Esophagus muscularis mucosa (tissue), 4 donors: ENCODE measurements at regions of chr10 and their contacts with region 1.

Region 1: DNA sequence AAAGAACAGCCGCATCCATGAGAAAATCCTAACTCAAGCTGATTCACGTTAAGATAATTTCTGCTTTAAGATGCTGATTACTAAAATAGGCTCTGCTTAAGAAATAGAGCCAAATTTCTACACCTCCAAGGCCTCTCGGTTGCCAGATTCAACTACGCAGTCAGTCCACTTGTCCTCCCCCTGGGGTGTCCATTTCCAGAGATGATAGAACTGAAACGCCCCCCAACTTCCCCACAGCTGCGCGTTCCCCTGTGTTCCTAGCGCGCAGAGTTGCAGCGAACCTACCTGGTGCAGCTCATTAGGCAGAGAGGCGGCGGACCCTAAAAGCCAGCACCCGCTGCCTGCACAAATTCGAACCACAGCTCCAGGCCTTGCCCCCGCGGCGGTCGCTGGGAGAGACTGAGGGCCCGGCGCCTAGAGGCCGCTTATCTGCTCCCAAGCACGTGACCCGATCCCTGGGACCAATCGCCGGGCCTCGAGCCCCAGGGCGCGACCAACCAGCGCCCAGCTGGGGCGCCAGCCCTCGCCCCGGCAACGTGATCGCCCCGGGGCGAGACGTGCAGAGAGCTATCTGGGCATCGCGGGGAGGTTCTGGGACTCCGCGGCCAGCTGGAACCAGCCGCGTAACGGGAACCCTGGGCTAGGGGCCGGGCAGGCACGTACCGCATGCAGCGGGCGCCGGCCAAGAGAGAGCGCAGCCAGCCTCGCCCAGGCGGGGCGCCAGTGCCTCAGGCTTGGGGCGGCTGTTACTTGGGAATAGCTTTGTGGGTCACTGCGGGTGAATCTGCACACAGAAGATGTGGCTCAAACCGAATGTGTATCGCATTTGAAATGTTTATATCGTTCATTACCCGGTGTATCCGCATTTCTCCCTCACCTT is at the start of gene PPP1R3C:
- DNase-seq: peak; percentile 95
- H3K4me3 ChIP-seq: peak within 1 kb of the TSS; percentile 65 to 78 (median 69)
- H3K27ac ChIP-seq: peak within 1 kb of the TSS; percentile 82 to 91 (median 86)
- H3K4me1 ChIP-seq: peaks cover 21 to 46% (median 37%) of the 10 kb centered on the region in 4 donors
- H3K27me3 ChIP-seq: no peaks in the 10 kb centered on the region
- CTCF ChIP-seq: peak; percentile 32 to 43 (median 37)
- EP300 ChIP-seq: no peak
- POLR2A ChIP-seq: peak; percentile 89
- total RNA-seq, gene PPP1R3C: 46.7 to 111 (median 87.8) TPM

Region 2: GRCh38 chr10:91298224-91298871 is 334.6 kb before region 1 on chr10:
- intact Hi-C with region 1: loop called (anchors 5 kb)
- DNase-seq: no peak
- H3K4me3 ChIP-seq: peak overlapping the region; percentile 45 to 55 (median 52)
- H3K27ac ChIP-seq: peak overlapping the region; percentile 36 to 68 (median 50)
- H3K4me1 ChIP-seq: peaks cover 3 to 13% (median 13%) of the 10 kb centered on the region in 4 donors
- H3K27me3 ChIP-seq: peaks cover 0 to 5% (median 0%) of the 10 kb centered on the region in 4 donors
- CTCF ChIP-seq: peak; percentile 87 to 94 (median 91)
- EP300 ChIP-seq: no peak
- POLR2A ChIP-seq: no peak

Region 3: GRCh38 chr10:91493313-91493712 is 139.6 kb before region 1 on chr10:
- intact Hi-C with region 1: loop called (anchors 2 kb)
- DNase-seq: no peak
- H3K4me3 ChIP-seq: no peak overlapping the region
- H3K27ac ChIP-seq: no peak overlapping the region
- H3K4me1 ChIP-seq: peaks cover 0 to 6% (median 2%) of the 10 kb centered on the region in 4 donors
- H3K27me3 ChIP-seq: no peaks in the 10 kb centered on the region
- CTCF ChIP-seq: peak; percentile 60 to 65 (median 62)
- EP300 ChIP-seq: no peak
- POLR2A ChIP-seq: no peak

Region 4: DNA sequence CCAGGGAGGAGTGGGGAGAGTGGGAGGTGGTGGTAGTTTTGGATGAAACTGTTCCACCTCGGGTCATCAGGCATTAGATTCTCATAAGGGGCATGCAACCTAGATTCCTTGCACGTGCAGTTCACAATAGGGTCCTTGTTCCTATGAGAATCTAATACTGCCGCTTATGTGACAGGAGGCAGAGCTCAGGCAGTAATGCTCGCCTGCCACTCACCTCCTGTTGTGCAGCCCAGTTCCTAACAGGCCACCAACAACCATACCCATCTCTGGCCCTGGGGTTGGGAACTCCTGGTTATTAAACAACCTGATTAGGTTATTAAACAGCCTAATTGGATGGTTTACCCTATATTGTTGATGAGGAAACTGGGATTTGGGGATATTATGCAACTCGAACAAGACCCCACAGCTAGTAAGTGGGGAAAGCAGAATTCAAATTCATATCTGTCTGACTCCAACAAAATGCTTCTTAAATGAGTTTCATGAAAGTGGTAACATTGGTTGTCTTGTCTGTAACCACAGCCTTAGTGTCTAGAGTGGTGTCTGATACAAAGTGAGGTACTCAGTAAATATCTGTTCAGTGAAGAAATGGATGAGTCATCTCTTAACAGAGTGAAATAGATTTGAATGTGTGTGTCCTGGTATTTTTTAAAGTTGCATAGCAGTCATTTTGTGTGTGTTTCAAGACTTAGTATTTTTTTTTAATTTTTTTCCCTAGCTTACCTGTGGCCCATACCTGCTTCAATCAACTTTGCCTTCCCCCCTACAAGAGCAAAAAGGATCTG is 121.2 kb before region 1 on chr10:
- intact Hi-C with region 1: loop called (anchors 5 kb)
- DNase-seq: no peak
- H3K4me3 ChIP-seq: no peak overlapping the region
- H3K27ac ChIP-seq: peak overlapping the region in 3 of 4 donors; percentile 17 to 28 (median 26)
- H3K4me1 ChIP-seq: peaks cover 0 to 26% (median 13%) of the 10 kb centered on the region in 4 donors
- H3K27me3 ChIP-seq: no peaks in the 10 kb centered on the region
- CTCF ChIP-seq: no peak
- EP300 ChIP-seq: no peak
- POLR2A ChIP-seq: no peak

Region 5: DNA sequence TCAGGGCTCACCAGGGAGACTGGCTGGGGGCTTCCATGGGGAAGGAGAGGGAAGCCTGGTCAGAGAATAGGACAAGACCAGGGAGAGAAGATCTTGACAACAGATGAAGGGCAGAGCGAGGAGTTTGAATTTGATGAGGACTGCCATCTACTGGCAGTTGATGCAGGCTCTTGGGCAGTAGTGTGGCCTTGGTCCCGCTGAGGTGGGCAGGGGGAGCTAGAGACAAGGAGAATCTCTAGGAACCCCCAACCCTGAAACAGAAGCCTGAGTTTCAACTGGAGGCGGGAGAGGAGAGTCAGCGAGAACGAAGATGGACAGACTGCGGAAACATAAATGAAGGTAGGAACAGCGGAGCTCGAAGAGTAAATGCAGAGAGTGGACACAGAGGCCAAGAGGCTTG is 81.1 kb before region 1 on chr10:
- intact Hi-C with region 1: loop called (anchors 5 kb)
- DNase-seq: no peak
- H3K4me3 ChIP-seq: peak overlapping the region in 1 of 4 donors; percentile 1
- H3K27ac ChIP-seq: no peak overlapping the region
- H3K4me1 ChIP-seq: peaks cover 6 to 13% (median 12%) of the 10 kb centered on the region in 4 donors
- H3K27me3 ChIP-seq: no peaks in the 10 kb centered on the region
- CTCF ChIP-seq: peak; percentile 47 to 48 (median 47)
- EP300 ChIP-seq: no peak
- POLR2A ChIP-seq: no peak

Region 6: GRCh38 chr10:91590142-91590903 is 42.6 kb before region 1 on chr10:
- intact Hi-C with region 1: loop called (anchors 5 kb)
- DNase-seq: no peak
- H3K4me3 ChIP-seq: peak overlapping the region in 1 of 4 donors; percentile 6
- H3K27ac ChIP-seq: peak overlapping the region; percentile 90 to 91 (median 90)
- H3K4me1 ChIP-seq: peaks cover 59 to 79% (median 75%) of the 10 kb centered on the region in 4 donors
- H3K27me3 ChIP-seq: no peaks in the 10 kb centered on the region
- CTCF ChIP-seq: no peak
- EP300 ChIP-seq: no peak
- POLR2A ChIP-seq: no peak